ENCODE measurements at regions of chr9 and their contacts with region 1.

Region 1: DNA sequence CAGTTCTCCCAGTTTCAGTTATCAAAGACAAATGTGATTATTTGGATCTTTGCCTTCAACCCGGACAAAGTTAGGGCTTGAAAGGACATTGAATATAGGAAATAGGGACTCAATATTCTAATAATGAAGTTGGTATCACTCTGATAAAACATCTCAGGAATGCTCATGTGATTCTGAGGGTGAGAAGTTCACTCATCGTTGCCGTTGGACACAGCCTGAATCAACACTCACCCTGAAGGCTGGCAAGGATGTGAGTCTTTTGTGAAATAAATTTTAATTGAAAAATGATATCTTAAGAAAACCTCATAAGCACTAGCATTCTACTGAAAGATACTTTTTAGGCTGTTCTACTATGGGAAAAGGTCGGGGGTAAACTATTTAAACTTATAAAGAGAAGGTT is 44.8 kb upstream of the C9orf72 start:
- DNase-seq: no peak
- ATAC-seq: no peak
- H3K4me3 ChIP-seq: no peak overlapping the region
- H3K4me3 Mint-ChIP-seq: no peak overlapping the region
- H3K27ac ChIP-seq: no peak overlapping the region
- H3K27ac Mint-ChIP-seq: no peak overlapping the region
- H3K4me1 ChIP-seq: no peaks in the 10 kb centered on the region
- H3K4me1 Mint-ChIP-seq: no peaks in the 10 kb centered on the region
- H3K27me3 ChIP-seq: no peaks in the 10 kb centered on the region
- H3K27me3 Mint-ChIP-seq: peaks cover 13% of the 10 kb centered on the region
- CTCF ChIP-seq: no peak

Region 2: GRCh38 chr9:27590651-27591050 is 27.4 kb before region 1 on chr9:
- CTCF ChIA-PET with region 1: no interaction called
- POLR2A ChIA-PET with region 1: no interaction called
- intact Hi-C with region 1: no loop called
- DNase-seq: no peak
- ATAC-seq: no peak
- H3K4me3 ChIP-seq: no peak overlapping the region
- H3K4me3 Mint-ChIP-seq: no peak overlapping the region
- H3K27ac ChIP-seq: no peak overlapping the region
- H3K27ac Mint-ChIP-seq: no peak overlapping the region
- H3K4me1 ChIP-seq: no peaks in the 10 kb centered on the region
- H3K4me1 Mint-ChIP-seq: no peaks in the 10 kb centered on the region
- H3K27me3 ChIP-seq: peaks cover 6 to 12% of the 10 kb centered on the region in 2 experiments
- H3K27me3 Mint-ChIP-seq: peaks cover 32% of the 10 kb centered on the region
- CTCF ChIP-seq: no peak

Region 3: GRCh38 chr9:28648723-28649122 is 1030.7 kb after region 1 on chr9:
- CTCF ChIA-PET with region 1: no interaction called
- POLR2A ChIA-PET with region 1: no interaction called
- intact Hi-C with region 1: loop called in 1 of 2 experiments (anchors 10 kb)
- DNase-seq: no peak
- ATAC-seq: no peak
- H3K4me3 ChIP-seq: no peak overlapping the region
- H3K4me3 Mint-ChIP-seq: no peak overlapping the region
- H3K27ac ChIP-seq: no peak overlapping the region
- H3K27ac Mint-ChIP-seq: no peak overlapping the region
- H3K4me1 ChIP-seq: no peaks in the 10 kb centered on the region
- H3K4me1 Mint-ChIP-seq: no peaks in the 10 kb centered on the region
- H3K27me3 ChIP-seq: no peaks in the 10 kb centered on the region
- H3K27me3 Mint-ChIP-seq: no peaks in the 10 kb centered on the region
- CTCF ChIP-seq: no peak

Measured in CD8-positive, alpha-beta T cell (primary cell).